Posterior vena cava (tissue), 2 donors: ENCODE measurements at regions of chrX and their contacts with region 1.

Region 1: GRCh38 chrX:105745863-105746262 is 76.5 kb upstream of the NRK start:
- DNase-seq: no peak

Region 2: GRCh38 chrX:105610401-105610800 is 135.5 kb before region 1 on chrX:
- intact Hi-C with region 1: loop called in 1 of 2 experiments (anchors 10 kb)
- DNase-seq: no peak